ENCODE measurements at regions of chr1 and their contacts with region 1.

Region 1: DNA sequence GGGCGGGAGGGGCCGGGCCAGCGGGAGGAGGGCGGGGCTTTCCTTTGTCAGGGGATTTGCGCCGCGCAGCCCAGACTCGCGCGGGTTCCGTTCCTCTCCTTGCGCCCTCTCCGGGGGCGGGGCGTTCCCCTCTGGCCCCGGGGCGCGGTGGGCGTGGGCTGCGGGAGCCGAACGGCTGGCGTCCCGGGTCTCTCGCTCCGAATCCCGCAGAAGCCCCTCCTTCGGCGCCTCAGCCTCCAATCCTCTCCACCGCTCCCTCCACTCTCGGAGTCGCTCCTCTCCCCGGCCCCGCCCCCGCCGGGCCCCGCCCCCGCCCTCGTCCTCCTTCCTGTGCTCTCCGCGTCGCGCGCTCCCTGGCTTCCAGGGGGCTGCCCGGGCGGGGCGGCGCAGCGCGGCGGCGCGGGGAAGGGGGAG is 82.8 kb upstream of the BMP8A start:
- DNase-seq: peak; percentile 97
- H3K4me3 ChIP-seq: peak overlapping the region; percentile 67 to 97 (median 96)
- H3K27ac ChIP-seq: peak overlapping the region; percentile 79
- H3K4me1 ChIP-seq: peaks cover 54% of the 10 kb centered on the region
- H3K27me3 ChIP-seq: no peaks in the 10 kb centered on the region
- CTCF ChIP-seq: no peak
- POLR2A ChIP-seq: peak; percentile 4

Region 2: DNA sequence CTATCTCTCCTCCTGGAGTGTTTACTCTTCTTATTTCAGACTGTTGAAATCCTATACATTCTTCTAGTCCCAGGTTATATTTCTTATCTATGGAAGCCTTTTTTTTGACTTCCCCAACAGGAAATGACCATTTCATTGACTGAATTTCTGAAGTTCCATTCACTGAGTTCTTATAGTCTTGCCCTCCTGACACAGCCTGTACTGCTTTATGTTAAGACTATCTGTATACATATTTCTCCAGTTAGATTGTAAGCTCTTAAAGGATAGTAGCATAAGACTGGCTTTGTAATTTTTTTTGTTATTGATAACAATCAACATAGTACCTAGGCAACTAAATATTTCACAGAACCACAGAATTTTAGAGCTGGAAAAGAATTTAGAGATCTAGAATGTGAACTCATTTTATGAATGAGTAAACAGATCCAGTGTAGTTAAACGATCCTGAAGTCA is 219.0 kb before region 1 on chr1:
- CTCF ChIA-PET with region 1: interaction called, 4 read pairs
- POLR2A ChIA-PET with region 1: no interaction called
- dilution Hi-C with region 1: no loop called
- intact Hi-C with region 1: loop called (anchors 5 kb)
- DNase-seq: peak; percentile 81
- H3K4me3 ChIP-seq: peak overlapping the region in 2 of 3 experiments; percentile 17 to 37
- H3K27ac ChIP-seq: peak overlapping the region; percentile 97
- H3K4me1 ChIP-seq: peaks cover 95% of the 10 kb centered on the region
- H3K27me3 ChIP-seq: no peaks in the 10 kb centered on the region
- CTCF ChIP-seq: no peak
- POLR2A ChIP-seq: no peak

Region 3: GRCh38 chr1:39360731-39361130 is 47.9 kb before region 1 on chr1:
- CTCF ChIA-PET with region 1: interaction called, 21 read pairs
- POLR2A ChIA-PET with region 1: no interaction called
- dilution Hi-C with region 1: no loop called
- intact Hi-C with region 1: loop called (anchors 10 kb)
- DNase-seq: no peak
- H3K4me3 ChIP-seq: no peak overlapping the region
- H3K27ac ChIP-seq: no peak overlapping the region
- H3K4me1 ChIP-seq: peaks cover 3% of the 10 kb centered on the region
- H3K27me3 ChIP-seq: no peaks in the 10 kb centered on the region
- CTCF ChIP-seq: no peak
- POLR2A ChIP-seq: no peak

Region 4: GRCh38 chr1:39378377-39378776 is 30.3 kb before region 1 on chr1:
- CTCF ChIA-PET with region 1: interaction called, 273 read pairs
- POLR2A ChIA-PET with region 1: no interaction called
- dilution Hi-C with region 1: no loop called
- intact Hi-C with region 1: loop called (anchors 1 kb)
- DNase-seq: no peak
- H3K4me3 ChIP-seq: no peak overlapping the region
- H3K27ac ChIP-seq: no peak overlapping the region
- H3K4me1 ChIP-seq: peaks cover 24% of the 10 kb centered on the region
- H3K27me3 ChIP-seq: no peaks in the 10 kb centered on the region
- CTCF ChIP-seq: peak; percentile 4 to 17
- POLR2A ChIP-seq: no peak

Region 5: DNA sequence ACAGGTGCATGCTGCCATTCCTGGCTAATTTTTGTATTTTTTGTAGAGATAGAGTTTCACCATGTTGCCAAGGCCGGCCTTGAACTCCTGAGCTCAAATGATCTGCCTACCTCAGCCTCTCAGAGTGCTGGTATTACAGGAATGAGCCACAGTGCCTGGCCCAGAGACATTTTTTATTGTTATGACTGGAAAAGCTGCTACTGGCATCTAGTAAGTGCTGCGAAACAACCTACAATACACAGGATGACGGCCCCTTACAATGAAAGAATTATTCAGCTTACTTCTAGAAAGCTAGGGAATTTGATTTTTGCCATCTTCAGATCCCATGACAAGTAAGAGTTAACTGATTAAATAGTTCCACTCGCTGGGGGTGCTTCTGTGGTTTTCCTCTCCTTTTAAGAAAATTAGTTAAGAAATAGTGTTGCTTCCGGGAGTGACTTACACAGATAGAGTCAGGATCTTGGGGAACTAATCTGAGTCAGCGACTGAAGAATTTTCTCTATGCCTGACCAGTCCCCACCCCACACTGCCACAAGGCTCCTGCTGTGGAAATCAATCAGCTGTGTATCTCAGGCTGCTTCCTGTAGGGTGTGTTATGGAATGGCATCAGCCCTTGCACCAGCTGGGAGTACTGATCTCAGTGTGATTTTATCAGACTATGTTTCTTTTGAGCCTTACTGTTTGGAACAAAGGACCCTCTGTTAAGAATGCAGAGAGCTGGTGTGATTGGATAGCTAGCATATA is 10.2 kb before region 1 on chr1:
- CTCF ChIA-PET with region 1: interaction called, 78 read pairs
- POLR2A ChIA-PET with region 1: interaction called, 26 read pairs
- dilution Hi-C with region 1: no loop called
- intact Hi-C with region 1: loop called (anchors 1 kb)
- DNase-seq: peak; percentile 95
- H3K4me3 ChIP-seq: peak overlapping the region in 1 of 3 experiments; percentile 19
- H3K27ac ChIP-seq: peak overlapping the region; percentile 85
- H3K4me1 ChIP-seq: peaks cover 63% of the 10 kb centered on the region
- H3K27me3 ChIP-seq: no peaks in the 10 kb centered on the region
- CTCF ChIP-seq: no peak
- POLR2A ChIP-seq: peak; percentile 64